Caco-2 (cell line): ENCODE measurements at regions of chr5 and their contacts with region 1.

Region 1: DNA sequence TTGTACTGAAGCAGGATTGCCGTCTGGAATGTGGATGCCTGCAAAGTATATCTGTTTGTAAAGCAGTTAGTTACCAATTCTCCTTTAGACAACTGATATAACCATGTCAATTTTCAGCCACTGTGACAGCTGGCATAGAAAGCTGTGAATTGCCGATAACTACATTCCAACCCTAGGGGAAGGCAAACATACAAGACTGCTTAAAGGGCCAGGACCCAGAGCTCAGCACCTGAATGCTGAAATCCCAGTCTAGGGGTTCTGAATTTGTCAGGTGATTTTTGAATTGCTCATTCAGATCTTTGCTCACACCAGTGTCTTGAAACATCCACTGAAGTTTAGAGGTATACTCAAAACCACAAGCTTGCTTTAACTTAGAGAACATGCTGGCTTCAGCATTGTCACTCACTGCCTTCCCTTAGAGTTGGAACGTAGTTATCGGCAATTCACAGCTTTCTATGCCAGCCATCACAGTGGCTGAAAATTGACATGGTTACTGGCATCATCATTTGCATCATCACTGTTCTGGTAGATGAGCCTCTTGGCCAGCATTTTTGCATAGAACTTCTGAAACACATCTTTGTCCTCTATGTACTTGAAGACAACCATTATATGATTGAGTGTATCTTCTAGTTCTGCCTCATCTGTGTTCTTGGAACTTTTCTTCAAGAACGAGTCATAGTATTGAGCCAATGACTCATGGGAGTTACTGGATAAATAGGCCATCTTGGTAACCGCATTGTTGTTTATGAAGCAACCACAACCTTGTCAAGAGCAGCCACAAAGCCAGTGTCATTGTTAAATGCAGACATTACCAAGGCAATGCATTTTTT is 82.1 kb downstream of the CCDC192 start:
- DNase-seq: peak; percentile 36 to 37
- H3K4me3 ChIP-seq: no peak overlapping the region
- H3K4me3 Mint-ChIP-seq: no peak overlapping the region
- H3K27ac Mint-ChIP-seq: peak overlapping the region; percentile 60
- H3K4me1 ChIP-seq: peaks cover 16% of the 10 kb centered on the region
- H3K4me1 Mint-ChIP-seq: peaks cover 15% of the 10 kb centered on the region
- H3K27me3 ChIP-seq: no peaks in the 10 kb centered on the region
- H3K27me3 Mint-ChIP-seq: no peaks in the 10 kb centered on the region
- CTCF ChIP-seq: no peak

Region 2: GRCh38 chr5:127447827-127448226 is 337.5 kb before region 1 on chr5:
- CTCF ChIA-PET with region 1: no interaction called
- POLR2A ChIA-PET with region 1: no interaction called
- intact Hi-C with region 1: no loop called
- DNase-seq: no peak
- H3K4me3 ChIP-seq: no peak overlapping the region
- H3K4me3 Mint-ChIP-seq: no peak overlapping the region
- H3K27ac Mint-ChIP-seq: no peak overlapping the region
- H3K4me1 ChIP-seq: no peaks in the 10 kb centered on the region; the same call in 1 of the 2 replicates
- H3K4me1 Mint-ChIP-seq: no peaks in the 10 kb centered on the region
- H3K27me3 ChIP-seq: no peaks in the 10 kb centered on the region
- H3K27me3 Mint-ChIP-seq: peaks cover 2% of the 10 kb centered on the region
- CTCF ChIP-seq: no peak

Region 3: DNA sequence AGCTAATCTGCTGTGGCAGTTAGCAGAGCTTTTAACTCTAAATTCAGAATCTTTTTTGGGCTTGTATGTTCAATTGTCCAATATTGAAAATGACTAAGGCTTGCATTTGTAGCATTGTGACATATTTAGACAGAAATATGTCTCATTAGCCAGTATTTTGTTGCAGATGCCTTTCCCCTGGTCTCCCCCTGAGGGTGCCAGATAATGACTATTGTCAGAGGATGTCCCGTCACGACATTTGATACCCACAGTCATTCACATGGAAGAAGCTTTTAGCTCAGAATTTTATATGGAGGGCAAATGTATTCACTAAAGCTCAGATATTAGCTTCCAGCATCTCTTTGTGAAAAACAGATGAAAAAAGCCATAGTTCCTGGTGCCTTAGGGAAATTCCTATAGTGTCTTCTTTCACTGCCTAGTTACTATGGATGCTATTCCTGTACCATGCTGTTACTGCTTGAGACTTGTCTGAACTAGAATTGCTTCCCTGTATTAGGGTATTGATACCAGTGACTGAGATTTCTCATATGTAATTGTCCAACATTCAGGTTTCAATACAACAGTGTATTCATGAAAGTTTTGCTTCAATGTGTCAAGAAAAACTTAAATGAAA is 14.1 kb after region 1 on chr5:
- CTCF ChIA-PET with region 1: no interaction called
- POLR2A ChIA-PET with region 1: no interaction called
- intact Hi-C with region 1: no loop called
- DNase-seq: no peak
- H3K4me3 ChIP-seq: no peak overlapping the region
- H3K4me3 Mint-ChIP-seq: no peak overlapping the region
- H3K27ac Mint-ChIP-seq: no peak overlapping the region
- H3K4me1 ChIP-seq: no peaks in the 10 kb centered on the region
- H3K4me1 Mint-ChIP-seq: no peaks in the 10 kb centered on the region
- H3K27me3 ChIP-seq: no peaks in the 10 kb centered on the region
- H3K27me3 Mint-ChIP-seq: no peaks in the 10 kb centered on the region
- CTCF ChIP-seq: no peak

Region 4: DNA sequence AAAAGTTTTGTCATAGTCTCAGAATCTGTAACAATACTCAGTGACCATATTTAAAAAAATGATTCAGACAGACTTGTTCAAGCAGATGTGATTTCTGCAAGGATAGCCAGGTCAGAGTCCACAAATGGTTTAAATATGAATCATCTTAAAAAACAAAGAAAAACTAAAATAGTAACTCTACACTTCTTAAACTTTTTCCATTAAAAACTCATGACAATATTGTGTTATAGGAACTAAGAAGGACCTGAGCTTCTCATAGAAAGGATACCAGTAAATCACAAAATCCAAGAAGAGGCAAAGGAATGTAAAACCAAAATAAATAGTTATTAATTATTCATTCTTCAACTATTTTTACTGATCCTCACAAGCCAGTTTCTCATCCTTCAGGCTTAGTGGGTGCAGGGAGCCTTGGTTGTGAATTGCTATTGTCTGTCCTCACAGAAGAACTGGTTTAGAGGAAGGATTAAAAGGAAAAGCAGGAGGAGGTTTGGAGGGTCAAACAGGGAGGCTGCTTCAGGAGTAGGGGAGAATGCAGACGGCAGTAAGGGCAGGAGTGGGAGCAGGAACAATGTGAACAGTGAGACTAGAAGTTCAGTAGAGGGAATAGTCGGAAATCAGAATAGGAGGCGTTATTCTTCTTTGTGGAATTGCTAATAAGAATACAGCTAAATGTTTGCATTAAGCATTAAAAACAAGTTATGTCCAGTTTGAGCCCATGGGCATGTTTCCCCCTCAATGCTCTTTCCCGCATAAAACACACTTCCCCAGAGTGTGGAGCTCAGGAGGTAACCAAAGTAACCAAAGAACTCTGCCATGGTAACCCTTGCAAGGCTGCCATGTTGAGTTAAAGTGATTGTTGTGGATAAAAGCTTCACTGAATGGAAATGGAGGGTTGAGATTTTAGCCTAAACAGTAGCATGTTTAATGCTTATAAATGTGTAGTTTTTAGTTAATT is 28.6 kb after region 1 on chr5:
- CTCF ChIA-PET with region 1: interaction called, 3 read pairs
- POLR2A ChIA-PET with region 1: no interaction called
- intact Hi-C with region 1: loop called (anchors 2 kb)
- DNase-seq: peak; percentile 33 to 60
- H3K4me3 ChIP-seq: no peak overlapping the region
- H3K4me3 Mint-ChIP-seq: peak overlapping the region; percentile 16
- H3K27ac Mint-ChIP-seq: peak overlapping the region; percentile 66
- H3K4me1 ChIP-seq: peaks cover 39% of the 10 kb centered on the region
- H3K4me1 Mint-ChIP-seq: peaks cover 43% of the 10 kb centered on the region
- H3K27me3 ChIP-seq: no peaks in the 10 kb centered on the region
- H3K27me3 Mint-ChIP-seq: no peaks in the 10 kb centered on the region
- CTCF ChIP-seq: no peak